GM12878 (cell line): ENCODE measurements at regions of chr16 and their contacts with region 1.

Region 1: DNA sequence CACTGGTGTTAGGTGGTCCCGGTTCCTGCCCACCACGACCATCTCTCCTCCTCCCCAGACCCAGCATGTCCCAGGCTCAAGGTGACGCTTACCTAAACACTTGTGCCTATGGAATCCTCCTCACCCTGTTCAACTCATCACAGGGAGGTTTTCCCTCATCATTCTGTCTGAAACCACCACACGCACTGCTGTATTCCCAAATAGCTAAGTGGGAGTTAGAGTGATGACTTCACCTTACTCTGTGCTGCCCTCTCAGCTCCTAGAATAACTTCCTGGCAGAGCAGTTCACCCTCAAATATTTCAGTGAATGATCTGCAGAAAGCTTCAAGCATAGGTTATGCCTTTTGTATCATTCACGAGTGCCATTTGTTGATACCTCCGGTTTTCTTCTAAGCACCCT is 216.5 kb downstream of the CPPED1 start:
- DNase-seq: no peak
- ATAC-seq: no peak
- H3K4me3 ChIP-seq: no peak overlapping the region
- H3K27ac ChIP-seq: no peak overlapping the region
- H3K4me1 ChIP-seq: peaks cover 4% of the 10 kb centered on the region
- H3K27me3 ChIP-seq: no peaks in the 10 kb centered on the region
- CTCF ChIP-seq: no peak
- EP300 ChIP-seq: no peak
- POLR2A ChIP-seq: no peak
- RAD21 ChIP-seq: no peak

Region 2: DNA sequence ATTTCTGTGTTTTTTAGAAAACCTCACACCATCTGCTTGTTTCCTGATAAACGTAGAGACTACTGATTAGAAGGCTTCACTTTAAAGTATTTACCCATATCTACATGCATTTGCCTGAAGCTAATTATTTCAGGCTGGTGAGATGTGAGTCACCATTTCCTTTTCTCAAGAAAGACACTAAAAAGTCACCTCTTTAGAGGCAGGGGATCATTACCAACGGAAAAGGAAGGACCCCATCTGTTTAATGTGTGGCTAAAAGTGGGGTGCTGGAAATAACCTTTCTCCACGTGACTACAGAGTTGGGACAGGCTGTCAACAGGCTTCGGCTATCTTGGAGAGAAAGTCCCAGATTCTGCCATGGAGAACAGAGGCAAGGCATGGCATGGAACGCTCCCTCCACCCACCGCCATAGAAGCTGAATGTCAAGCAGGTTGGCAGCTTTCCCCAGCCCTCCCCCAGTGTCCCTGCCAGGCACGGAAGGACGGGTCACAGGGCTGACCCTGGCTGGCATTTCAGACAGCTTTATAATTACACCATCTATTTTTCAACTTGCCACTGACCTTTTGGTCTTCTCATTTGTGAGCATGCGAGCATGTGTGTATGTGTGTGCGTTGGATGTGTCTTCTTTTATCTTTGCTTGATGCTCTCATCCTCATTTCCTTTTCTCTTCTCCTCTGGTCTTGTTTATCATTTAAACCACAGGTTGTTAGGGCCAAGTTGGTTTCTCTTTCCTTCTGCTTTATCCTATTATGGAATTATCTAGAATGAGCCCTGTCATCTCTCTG is 59.5 kb after region 1 on chr16:
- CTCF ChIA-PET with region 1: no interaction called
- POLR2A ChIA-PET with region 1: no interaction called
- RAD21 ChIA-PET with region 1: no interaction called
- SMC1A ChIA-PET with region 1: no interaction called
- in situ Hi-C with region 1: loop called (anchors 5 kb)
- intact Hi-C with region 1: no loop called
- DNase-seq: peak; percentile 70
- ATAC-seq: peak; percentile 71
- H3K4me3 ChIP-seq: no peak overlapping the region
- H3K27ac ChIP-seq: 0 out of 2 replicates have a peak overlapping the region, but pooled peaks have one; percentile 2
- H3K4me1 ChIP-seq: no peaks in the 10 kb centered on the region
- H3K27me3 ChIP-seq: no peaks in the 10 kb centered on the region
- CTCF ChIP-seq: no peak
- EP300 ChIP-seq: no peak
- POLR2A ChIP-seq: no peak
- RAD21 ChIP-seq: no peak